ENCODE measurements at regions of chr12 and their contacts with region 1.

Region 1: GRCh38 chr12:10212201-10213131 is at the start of gene GABARAPL1:
- DNase-seq: peak; percentile 77 to 90 (median 85)
- ATAC-seq: peak; percentile 85
- H3K4me3 ChIP-seq: peak within 1 kb of the TSS; percentile 91
- H3K4me3 Mint-ChIP-seq: peak within 1 kb of the TSS; percentile 94 to 98 (median 96)
- H3K27ac ChIP-seq: peak within 1 kb of the TSS; percentile 84
- H3K27ac Mint-ChIP-seq: peak within 1 kb of the TSS; percentile 91 to 99 (median 96)
- H3K4me1 ChIP-seq: peaks cover 12 to 22% of the 10 kb centered on the region in 2 donors
- H3K4me1 Mint-ChIP-seq: peaks cover 14 to 31% (median 25%) of the 10 kb centered on the region in 7 donors
- H3K27me3 ChIP-seq: no peaks in the 10 kb centered on the region
- H3K27me3 Mint-ChIP-seq: peaks cover 0 to 37% (median 0%) of the 10 kb centered on the region in 5 donors
- total RNA-seq, gene GABARAPL1: 3.7 to 165 (median 29.4) TPM

Region 2: GRCh38 chr12:8697476-8698131 is 1514.9 kb before region 1 on chr12 and contains the start of gene RIMKLB:
- CTCF ChIA-PET with region 1: no interaction called
- POLR2A ChIA-PET with region 1: no interaction called
- intact Hi-C with region 1: loop called in 1 of 2 experiments (anchors 1 kb)
- DNase-seq: peak; percentile 59 to 75 (median 72)
- ATAC-seq: peak; percentile 93
- H3K4me3 ChIP-seq: peak within 1 kb of the TSS; percentile 79
- H3K4me3 Mint-ChIP-seq: peak within 1 kb of the TSS; percentile 89 to 95 (median 93)
- H3K27ac ChIP-seq: peak within 1 kb of the TSS; percentile 79
- H3K27ac Mint-ChIP-seq: peak within 1 kb of the TSS; percentile 65 to 94 (median 90)
- H3K4me1 ChIP-seq: peaks cover 0 to 17% of the 10 kb centered on the region in 2 donors
- H3K4me1 Mint-ChIP-seq: peaks cover 11 to 44% (median 42%) of the 10 kb centered on the region in 7 donors
- H3K27me3 ChIP-seq: no peaks in the 10 kb centered on the region
- H3K27me3 Mint-ChIP-seq: peaks cover 0 to 64% (median 0%) of the 10 kb centered on the region in 5 donors
- total RNA-seq, gene RIMKLB: 1.8 to 31.3 (median 18.2) TPM

Region 3: GRCh38 chr12:9741726-9742125 is 470.7 kb before region 1 on chr12:
- CTCF ChIA-PET with region 1: no interaction called
- POLR2A ChIA-PET with region 1: interaction called, 4 read pairs
- intact Hi-C with region 1: loop called in 1 of 2 experiments (anchors 2 kb)
- DNase-seq: peak in 8 of 9 donors; percentile 63 to 95 (median 90)
- ATAC-seq: peak; percentile 84
- H3K4me3 ChIP-seq: peak overlapping the region; percentile 15
- H3K4me3 Mint-ChIP-seq: peak overlapping the region; percentile 22 to 95 (median 83)
- H3K27ac ChIP-seq: peak overlapping the region; percentile 76
- H3K27ac Mint-ChIP-seq: peak overlapping the region; percentile 89 to 100 (median 98)
- H3K4me1 ChIP-seq: peaks cover 55 to 59% of the 10 kb centered on the region in 2 donors
- H3K4me1 Mint-ChIP-seq: peaks cover 51 to 81% (median 71%) of the 10 kb centered on the region in 7 donors
- H3K27me3 ChIP-seq: no peaks in the 10 kb centered on the region
- H3K27me3 Mint-ChIP-seq: peaks cover 0 to 6% (median 0%) of the 10 kb centered on the region in 5 donors

Region 4: DNA sequence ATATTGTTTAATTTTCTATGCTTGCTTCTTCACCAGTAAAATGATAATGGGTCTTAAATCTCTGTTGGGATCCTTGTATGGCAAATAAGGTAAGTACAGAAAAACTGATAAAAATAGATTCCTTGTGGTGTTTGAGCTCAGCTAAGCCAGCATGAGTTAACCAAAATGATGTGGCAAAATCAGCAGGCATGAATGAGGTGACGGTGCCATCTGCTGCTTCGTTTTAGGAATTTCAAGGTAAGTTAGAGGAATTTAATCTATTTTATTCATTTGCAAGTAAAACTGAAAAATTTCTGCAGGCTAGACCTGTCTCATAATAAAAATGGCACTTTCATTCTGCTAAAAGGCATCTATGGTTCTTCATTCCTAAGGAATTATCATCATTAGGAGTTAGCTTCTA is 72.5 kb before region 1 on chr12:
- CTCF ChIA-PET with region 1: no interaction called
- POLR2A ChIA-PET with region 1: no interaction called
- intact Hi-C with region 1: no loop called
- DNase-seq: peak in 7 of 9 donors; percentile 26 to 66 (median 49)
- ATAC-seq: peak; percentile 72
- H3K4me3 ChIP-seq: no peak overlapping the region
- H3K4me3 Mint-ChIP-seq: no peak overlapping the region
- H3K27ac ChIP-seq: no peak overlapping the region
- H3K27ac Mint-ChIP-seq: no peak overlapping the region
- H3K4me1 ChIP-seq: no peaks in the 10 kb centered on the region
- H3K4me1 Mint-ChIP-seq: peaks cover 0 to 3% (median 0%) of the 10 kb centered on the region in 7 donors
- H3K27me3 ChIP-seq: no peaks in the 10 kb centered on the region
- H3K27me3 Mint-ChIP-seq: peaks cover 0 to 51% (median 0%) of the 10 kb centered on the region in 5 donors

Region 5: DNA sequence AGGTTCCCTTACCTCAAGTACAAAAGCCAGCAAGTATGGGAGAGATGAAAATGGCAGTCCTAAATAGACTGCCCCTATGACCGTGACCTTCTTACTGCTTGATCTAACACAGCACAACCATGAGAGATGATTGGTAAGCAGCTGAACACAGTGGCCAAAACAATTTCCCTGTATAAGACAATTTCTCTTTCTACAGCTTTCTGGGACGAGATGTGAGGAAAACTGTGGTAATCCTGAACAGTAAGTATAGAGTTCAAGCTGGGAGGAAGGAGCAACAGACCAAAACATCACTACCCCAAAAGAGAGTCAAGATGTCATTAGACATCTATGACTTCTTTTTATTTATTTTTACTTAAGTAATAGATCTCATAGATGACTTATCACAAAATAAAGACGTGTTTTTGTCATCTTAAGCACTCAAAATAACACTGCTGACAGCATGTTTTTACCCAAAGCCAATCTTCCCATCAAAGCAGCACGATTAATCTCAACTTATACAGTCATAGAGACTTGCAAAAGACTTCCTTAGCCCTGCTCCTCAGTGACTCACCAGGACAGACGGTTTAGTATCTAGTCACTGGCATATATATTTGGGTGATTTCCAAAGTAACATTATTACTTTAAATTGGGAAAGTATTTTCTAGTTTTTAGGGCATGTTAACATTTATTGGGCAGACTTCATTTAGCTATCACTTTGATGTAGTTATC is 30.0 kb before region 1 on chr12:
- CTCF ChIA-PET with region 1: no interaction called
- POLR2A ChIA-PET with region 1: no interaction called
- intact Hi-C with region 1: no loop called
- DNase-seq: no peak
- ATAC-seq: peak; percentile 84
- H3K4me3 ChIP-seq: no peak overlapping the region
- H3K4me3 Mint-ChIP-seq: no peak overlapping the region
- H3K27ac ChIP-seq: no peak overlapping the region
- H3K27ac Mint-ChIP-seq: no peak overlapping the region
- H3K4me1 ChIP-seq: no peaks in the 10 kb centered on the region
- H3K4me1 Mint-ChIP-seq: peaks cover 0 to 7% (median 0%) of the 10 kb centered on the region in 7 donors
- H3K27me3 ChIP-seq: no peaks in the 10 kb centered on the region
- H3K27me3 Mint-ChIP-seq: peaks cover 5 to 35% (median 17%) of the 10 kb centered on the region in 5 donors

Region 6: DNA sequence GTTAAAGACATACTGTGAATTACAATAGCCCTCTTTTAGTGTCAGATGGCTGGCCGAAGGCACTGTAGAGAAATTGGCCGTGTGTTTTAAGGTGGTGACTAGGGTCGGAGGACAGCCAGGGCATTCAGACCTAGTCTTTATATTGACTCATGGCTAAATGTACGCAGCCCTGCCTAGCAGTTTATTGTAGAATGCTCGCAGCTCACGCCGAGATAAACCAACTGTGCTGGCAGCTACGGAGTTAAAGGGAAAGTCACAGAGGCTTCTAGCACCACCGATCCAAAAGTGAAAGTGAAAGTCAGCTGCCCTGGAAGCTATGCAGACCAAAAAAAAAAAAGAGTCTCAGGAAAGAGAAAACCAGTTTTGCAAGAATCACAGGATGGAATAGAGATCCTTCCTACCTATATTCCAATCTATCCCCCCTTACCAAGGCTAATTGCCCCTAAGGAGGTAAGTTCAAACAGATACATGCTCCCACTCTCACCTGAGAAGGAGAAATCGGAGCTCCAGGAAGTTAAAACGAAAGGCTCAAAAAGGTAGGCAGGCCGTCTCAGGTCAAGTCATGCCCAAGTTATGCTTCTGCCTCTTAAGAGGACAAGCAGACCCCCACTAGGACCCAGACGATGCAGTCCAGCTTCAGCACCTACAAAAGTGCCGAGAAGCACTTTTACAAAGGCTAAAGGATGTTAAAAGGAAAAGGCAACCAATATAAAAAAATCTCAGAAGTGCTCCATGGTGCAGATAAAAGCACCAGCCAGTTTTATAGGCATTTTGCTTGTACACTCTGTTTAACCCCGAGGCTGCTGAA is 152.6 kb after region 1 on chr12:
- CTCF ChIA-PET with region 1: no interaction called
- POLR2A ChIA-PET with region 1: interaction called, 7 read pairs
- intact Hi-C with region 1: loop called (anchors 1 to 10 kb)
- DNase-seq: peak; percentile 20 to 83 (median 77)
- ATAC-seq: peak; percentile 86
- H3K4me3 ChIP-seq: peak overlapping the region; percentile 81
- H3K4me3 Mint-ChIP-seq: no peak overlapping the region
- H3K27ac ChIP-seq: peak overlapping the region; percentile 85
- H3K27ac Mint-ChIP-seq: no peak overlapping the region
- H3K4me1 ChIP-seq: peaks cover 21 to 47% of the 10 kb centered on the region in 2 donors
- H3K4me1 Mint-ChIP-seq: peaks cover 6 to 25% (median 13%) of the 10 kb centered on the region in 7 donors
- H3K27me3 ChIP-seq: no peaks in the 10 kb centered on the region
- H3K27me3 Mint-ChIP-seq: peaks cover 0 to 32% (median 0%) of the 10 kb centered on the region in 5 donors

Region 7: DNA sequence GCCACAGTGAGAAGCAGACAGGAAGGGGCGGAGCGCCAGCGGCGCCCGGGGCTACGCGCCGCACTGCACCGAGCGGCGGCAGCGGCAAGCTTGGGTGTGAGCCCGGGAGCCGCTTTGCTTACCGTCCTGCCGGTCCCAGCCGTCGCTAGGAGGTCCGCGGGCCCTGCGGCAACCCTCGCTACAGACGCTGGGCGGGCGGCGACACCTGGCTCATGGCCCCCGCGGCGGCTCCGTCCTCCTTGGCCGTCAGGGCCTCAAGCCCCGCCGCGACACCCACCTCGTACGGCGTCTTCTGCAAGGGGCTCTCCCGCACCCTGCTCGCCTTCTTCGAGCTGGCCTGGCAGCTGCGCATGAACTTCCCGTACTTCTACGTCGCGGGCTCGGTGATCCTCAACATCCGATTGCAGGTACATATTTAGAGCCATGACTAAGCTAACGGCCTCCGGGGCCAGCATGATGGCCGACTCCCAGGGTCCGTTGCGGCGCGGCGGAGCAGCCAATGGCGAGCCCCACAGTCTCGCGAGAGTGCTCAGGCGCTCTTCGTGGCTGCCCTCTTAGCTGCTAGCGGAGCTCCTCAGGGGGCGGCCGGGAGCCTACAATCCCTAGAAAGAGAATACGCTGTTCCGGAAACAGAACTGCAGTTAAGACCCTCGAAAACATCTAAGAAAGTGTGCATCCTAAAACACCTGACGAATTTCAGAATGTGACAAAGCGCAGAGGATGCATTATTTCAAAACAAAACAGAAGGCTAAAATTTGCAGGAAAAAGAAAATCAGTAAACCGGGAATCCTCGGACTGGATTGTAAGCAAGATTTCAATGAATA is 958.9 kb after region 1 on chr12 and contains the start of gene SMIM10L1:
- CTCF ChIA-PET with region 1: no interaction called
- POLR2A ChIA-PET with region 1: interaction called, 3 read pairs
- intact Hi-C with region 1: loop called (anchors 1 kb)
- DNase-seq: peak; percentile 77 to 88 (median 83)
- ATAC-seq: peak; percentile 97
- H3K4me3 ChIP-seq: peak within 1 kb of the TSS; percentile 74
- H3K4me3 Mint-ChIP-seq: peak within 1 kb of the TSS; percentile 94 to 100 (median 98)
- H3K27ac ChIP-seq: peak within 1 kb of the TSS; percentile 72
- H3K27ac Mint-ChIP-seq: peak within 1 kb of the TSS; percentile 97 to 100 (median 99)
- H3K4me1 ChIP-seq: peaks cover 30 to 36% of the 10 kb centered on the region in 2 donors
- H3K4me1 Mint-ChIP-seq: peaks cover 53 to 82% (median 72%) of the 10 kb centered on the region in 7 donors
- H3K27me3 ChIP-seq: no peaks in the 10 kb centered on the region
- H3K27me3 Mint-ChIP-seq: no peaks in the 10 kb centered on the region
- total RNA-seq, gene SMIM10L1: 7.8 to 12.9 (median 8.5) TPM

Region 8: DNA sequence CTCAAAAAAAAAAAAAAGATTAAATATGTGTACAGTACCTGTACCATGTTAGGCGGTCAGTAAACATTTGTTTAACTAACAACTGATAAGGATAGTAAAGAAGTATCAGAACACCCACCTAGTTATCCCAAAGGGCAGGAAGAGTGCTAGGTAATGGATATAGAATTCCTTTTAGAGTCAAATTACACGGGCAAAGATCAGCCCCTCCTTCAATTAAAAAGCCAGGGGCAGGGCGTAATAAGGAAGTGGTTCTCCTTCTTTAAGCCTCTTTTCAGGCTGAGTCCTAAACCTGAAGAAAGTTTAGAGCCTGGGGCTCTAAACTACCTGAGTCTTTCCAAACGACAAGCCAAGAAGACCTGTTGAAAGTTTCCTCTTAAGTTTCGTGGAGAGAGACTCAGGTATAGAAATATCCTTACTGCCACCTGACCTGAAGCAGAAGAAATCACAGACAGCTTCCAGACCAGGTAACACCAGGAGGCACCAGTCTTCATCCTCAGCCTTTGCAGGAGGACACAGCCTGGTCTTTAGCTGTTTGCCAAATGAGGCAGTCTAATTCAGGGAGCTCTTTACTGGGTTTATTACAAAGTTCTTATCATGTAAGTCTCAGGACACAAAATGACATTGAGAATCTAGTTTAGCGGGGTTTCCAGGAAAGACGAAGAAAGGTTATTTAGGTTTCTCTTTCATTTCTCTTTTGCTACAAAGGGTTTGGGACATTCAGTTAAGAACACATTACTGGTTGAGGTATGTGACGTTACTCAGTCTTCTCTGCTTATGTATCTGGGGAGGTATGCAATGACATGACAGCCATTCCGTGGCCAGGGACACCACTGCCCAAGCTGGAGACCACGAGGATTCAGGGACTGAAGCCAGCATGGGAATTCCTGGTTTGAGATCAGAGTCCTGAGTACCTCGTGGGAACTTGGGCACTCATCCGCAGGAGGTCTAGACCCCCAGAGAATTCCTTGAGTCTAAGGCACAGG is 1858.5 kb after region 1 on chr12 and contains the start of gene BCL2L14:
- CTCF ChIA-PET with region 1: no interaction called
- POLR2A ChIA-PET with region 1: no interaction called
- intact Hi-C with region 1: loop called in 1 of 2 experiments (anchors 10 kb)
- DNase-seq: peak in 6 of 9 donors; percentile 11 to 34 (median 24)
- ATAC-seq: peak; percentile 40
- H3K4me3 ChIP-seq: peak within 1 kb of the TSS; percentile 47
- H3K4me3 Mint-ChIP-seq: peak within 1 kb of the TSS; percentile 65 to 92 (median 79)
- H3K27ac ChIP-seq: peak within 1 kb of the TSS; percentile 58
- H3K27ac Mint-ChIP-seq: peak within 1 kb of the TSS; percentile 52 to 96 (median 90)
- H3K4me1 ChIP-seq: peaks cover 0 to 5% of the 10 kb centered on the region in 2 donors
- H3K4me1 Mint-ChIP-seq: peaks cover 13 to 37% (median 24%) of the 10 kb centered on the region in 7 donors
- H3K27me3 ChIP-seq: no peaks in the 10 kb centered on the region
- H3K27me3 Mint-ChIP-seq: peaks cover 0 to 8% (median 0%) of the 10 kb centered on the region in 5 donors
- total RNA-seq, gene BCL2L14: 0.92 to 7.6 (median 1.4) TPM

Measured in naive thymus-derived CD4-positive, alpha-beta T cell (primary cell).